ENCODE measurements at regions of chr6 and their contacts with region 1.

Region 1: DNA sequence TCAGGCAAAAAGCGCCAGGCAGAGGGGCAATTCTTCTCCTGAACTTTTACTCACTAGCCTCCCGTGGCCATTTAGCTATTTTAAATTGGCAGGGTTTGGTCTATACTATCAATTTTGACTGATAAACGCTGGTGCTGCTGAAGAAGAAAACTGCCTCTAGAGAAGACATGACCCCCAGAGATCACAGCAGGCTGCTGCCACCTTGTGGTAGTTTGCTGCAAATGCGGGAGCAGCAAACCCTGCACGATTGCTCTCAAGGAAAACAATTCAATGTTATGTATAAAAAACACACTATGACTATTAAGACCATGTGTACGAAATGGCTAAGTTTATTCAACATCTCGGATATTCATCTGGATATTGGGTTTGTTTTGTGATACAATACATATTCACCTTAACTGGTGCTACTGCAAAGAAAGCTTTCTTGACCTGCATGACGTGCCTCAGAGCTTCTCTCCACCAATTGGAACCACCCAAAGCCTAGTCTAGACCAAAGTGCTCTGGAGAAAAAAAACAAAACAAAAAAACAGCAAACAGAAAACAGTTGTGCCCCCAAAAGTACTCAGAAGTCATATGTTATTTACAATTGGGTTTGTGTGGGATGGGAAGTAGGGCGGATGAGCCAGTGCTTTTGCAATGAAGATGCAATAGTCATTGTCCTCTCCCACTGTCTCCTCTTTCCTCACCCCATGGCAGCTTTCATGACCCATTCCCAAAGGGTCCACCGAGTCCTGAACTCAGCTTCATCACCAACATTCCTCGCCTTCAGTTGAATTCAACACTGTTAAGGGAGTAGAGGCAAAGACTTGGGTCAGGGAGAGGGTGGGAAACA is 19.6 kb upstream of the IL17F start:
- DNase-seq: peak; percentile 50 to 83
- ATAC-seq: peak; percentile 77 to 94 (median 91)
- H3K4me3 ChIP-seq: no peak overlapping the region
- H3K4me3 Mint-ChIP-seq: no peak overlapping the region
- H3K27ac ChIP-seq: no peak overlapping the region
- H3K27ac Mint-ChIP-seq: no peak overlapping the region
- H3K4me1 ChIP-seq: no peaks in the 10 kb centered on the region
- H3K4me1 Mint-ChIP-seq: peaks cover 0 to 5% of the 10 kb centered on the region in 2 donors
- H3K27me3 ChIP-seq: no peaks in the 10 kb centered on the region
- H3K27me3 Mint-ChIP-seq: no peaks in the 10 kb centered on the region
- CTCF ChIP-seq: peak; percentile 95

Region 2: DNA sequence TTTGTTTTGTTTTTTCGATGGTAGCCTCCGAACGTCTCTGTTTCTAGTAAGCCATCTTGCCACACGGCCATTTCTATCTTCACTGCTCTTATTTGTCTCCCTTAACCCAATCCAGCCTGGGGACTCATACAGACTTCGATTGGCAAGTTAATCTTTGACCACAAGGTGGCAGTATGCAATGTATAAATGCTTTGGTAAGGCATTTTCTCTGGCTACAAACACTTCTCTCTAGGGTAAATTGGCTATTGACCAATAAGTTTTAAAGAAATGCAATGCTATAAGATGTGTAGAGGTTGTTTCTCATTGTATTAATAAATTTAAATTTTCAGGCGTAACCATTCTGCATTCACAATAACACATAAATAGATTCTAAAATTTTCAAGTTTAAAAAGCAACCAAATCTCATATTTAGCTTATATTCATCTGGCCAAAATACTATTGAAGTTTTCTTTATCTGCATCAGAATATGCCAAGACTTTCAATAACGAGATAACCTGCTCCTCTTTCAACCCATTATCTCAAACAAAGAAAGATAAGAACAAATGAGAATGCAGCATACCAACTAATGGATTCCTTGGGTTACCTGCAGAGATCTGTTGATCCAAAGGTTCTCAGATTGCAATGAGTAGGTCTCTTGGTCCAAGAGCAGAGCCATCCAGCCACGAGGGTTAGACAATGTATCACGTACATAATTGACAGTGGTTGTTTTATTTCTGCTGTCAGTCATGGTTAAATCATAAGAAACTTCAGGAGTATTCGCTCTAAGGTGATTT is 408.4 kb before region 1 on chr6:
- intact Hi-C with region 1: loop called (anchors 5 kb)
- DNase-seq: peak in 1 of 2 donors; percentile 60
- ATAC-seq: no peak
- H3K4me3 ChIP-seq: no peak overlapping the region
- H3K4me3 Mint-ChIP-seq: no peak overlapping the region
- H3K27ac ChIP-seq: no peak overlapping the region
- H3K27ac Mint-ChIP-seq: no peak overlapping the region
- H3K4me1 ChIP-seq: no peaks in the 10 kb centered on the region
- H3K4me1 Mint-ChIP-seq: no peaks in the 10 kb centered on the region
- H3K27me3 ChIP-seq: no peaks in the 10 kb centered on the region
- H3K27me3 Mint-ChIP-seq: no peaks in the 10 kb centered on the region
- CTCF ChIP-seq: peak; percentile 52

Region 3: DNA sequence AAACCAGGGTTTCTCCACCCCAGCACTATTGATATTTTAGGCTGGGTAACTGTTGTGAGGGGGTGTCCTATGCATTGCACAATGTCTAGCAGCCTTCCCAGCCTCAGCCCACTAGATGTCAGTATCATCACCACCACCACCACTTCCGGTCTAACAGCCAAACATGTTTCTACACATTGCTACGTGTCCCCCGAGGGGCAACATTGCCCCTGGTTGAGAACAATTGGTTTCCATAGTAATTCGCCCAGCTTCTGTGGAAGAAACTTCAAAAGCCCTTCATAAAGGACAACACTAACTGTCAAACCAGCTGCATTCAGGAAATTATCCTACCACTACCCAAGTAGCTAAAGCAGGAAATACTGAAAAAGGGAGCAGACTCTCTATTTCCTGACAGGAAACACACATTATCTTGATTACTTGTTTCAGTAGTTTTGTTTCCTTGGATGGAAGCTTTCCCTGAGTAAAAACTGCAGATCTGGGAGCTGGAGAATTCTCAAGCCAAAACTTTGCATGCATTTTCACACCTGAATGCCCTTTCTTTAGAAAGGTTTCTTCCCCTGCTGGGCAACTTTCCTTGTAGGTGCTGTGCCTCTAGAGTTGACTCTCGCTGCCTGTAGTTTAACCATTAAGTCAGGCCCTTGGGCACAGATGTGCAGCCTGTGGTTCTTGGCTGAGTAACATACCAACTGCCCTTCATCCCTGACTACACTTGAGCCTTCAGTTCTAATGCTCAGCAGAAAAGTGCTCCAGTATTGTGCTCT is 200.2 kb before region 1 on chr6:
- intact Hi-C with region 1: loop called (anchors 1 kb)
- DNase-seq: peak; percentile 44 to 80
- ATAC-seq: peak; percentile 91 to 99 (median 97)
- H3K4me3 ChIP-seq: peak overlapping the region; percentile 21
- H3K4me3 Mint-ChIP-seq: peak overlapping the region; percentile 64
- H3K27ac ChIP-seq: no peak overlapping the region
- H3K27ac Mint-ChIP-seq: peak overlapping the region in 1 of 2 donors; percentile 43
- H3K4me1 ChIP-seq: peaks cover 11% of the 10 kb centered on the region
- H3K4me1 Mint-ChIP-seq: peaks cover 13% of the 10 kb centered on the region in 2 donors
- H3K27me3 ChIP-seq: peaks cover 4% of the 10 kb centered on the region
- H3K27me3 Mint-ChIP-seq: peaks cover 17 to 21% of the 10 kb centered on the region in 2 donors
- CTCF ChIP-seq: peak; percentile 57

Region 4: GRCh38 chr6:52104780-52105378 is 159.0 kb before region 1 on chr6:
- intact Hi-C with region 1: loop called (anchors 5 kb)
- DNase-seq: no peak
- ATAC-seq: no peak
- H3K4me3 ChIP-seq: no peak overlapping the region
- H3K4me3 Mint-ChIP-seq: no peak overlapping the region
- H3K27ac ChIP-seq: no peak overlapping the region
- H3K27ac Mint-ChIP-seq: no peak overlapping the region
- H3K4me1 ChIP-seq: no peaks in the 10 kb centered on the region
- H3K4me1 Mint-ChIP-seq: no peaks in the 10 kb centered on the region
- H3K27me3 ChIP-seq: peaks cover 2% of the 10 kb centered on the region
- H3K27me3 Mint-ChIP-seq: peaks cover 20 to 29% of the 10 kb centered on the region in 2 donors
- CTCF ChIP-seq: no peak

Region 5: GRCh38 chr6:52162940-52163908 is 100.7 kb before region 1 on chr6:
- intact Hi-C with region 1: loop called (anchors 1 kb)
- DNase-seq: peak in 1 of 2 donors; percentile 67
- ATAC-seq: peak in 2 of 3 donors; percentile 42 to 64
- H3K4me3 ChIP-seq: no peak overlapping the region
- H3K4me3 Mint-ChIP-seq: no peak overlapping the region
- H3K27ac ChIP-seq: no peak overlapping the region
- H3K27ac Mint-ChIP-seq: no peak overlapping the region
- H3K4me1 ChIP-seq: no peaks in the 10 kb centered on the region
- H3K4me1 Mint-ChIP-seq: no peaks in the 10 kb centered on the region
- H3K27me3 ChIP-seq: peaks cover 16% of the 10 kb centered on the region
- H3K27me3 Mint-ChIP-seq: peaks cover 18 to 85% of the 10 kb centered on the region in 2 donors
- CTCF ChIP-seq: peak; percentile 45

Region 6: GRCh38 chr6:52371656-52372191 is 107.8 kb after region 1 on chr6:
- intact Hi-C with region 1: no loop called
- DNase-seq: no peak
- ATAC-seq: no peak
- H3K4me3 ChIP-seq: no peak overlapping the region
- H3K4me3 Mint-ChIP-seq: no peak overlapping the region
- H3K27ac ChIP-seq: no peak overlapping the region
- H3K27ac Mint-ChIP-seq: no peak overlapping the region
- H3K4me1 ChIP-seq: no peaks in the 10 kb centered on the region
- H3K4me1 Mint-ChIP-seq: peaks cover 35 to 45% of the 10 kb centered on the region in 2 donors
- H3K27me3 ChIP-seq: no peaks in the 10 kb centered on the region
- H3K27me3 Mint-ChIP-seq: no peaks in the 10 kb centered on the region
- CTCF ChIP-seq: no peak

Measured in natural killer cell (primary cell).